Activated naive CD4-positive, alpha-beta T cell treated with anti-CD3 and anti-CD28 coated beads for 36 hours (primary cell): ENCODE measurements at regions of chr2 and their contacts with region 1.

Region 1: GRCh38 chr2:207625018-207625907 is at the start of gene METTL21A:
- DNase-seq: peak; percentile 95
- H3K4me3 Mint-ChIP-seq: peak within 1 kb of the TSS; percentile 88
- H3K27ac Mint-ChIP-seq: peak within 1 kb of the TSS; percentile 89
- H3K4me1 Mint-ChIP-seq: peaks cover 56% of the 10 kb centered on the region
- H3K27me3 Mint-ChIP-seq: no peaks in the 10 kb centered on the region
- total RNA-seq, gene METTL21A: 18.6 to 19.0 TPM

Region 2: DNA sequence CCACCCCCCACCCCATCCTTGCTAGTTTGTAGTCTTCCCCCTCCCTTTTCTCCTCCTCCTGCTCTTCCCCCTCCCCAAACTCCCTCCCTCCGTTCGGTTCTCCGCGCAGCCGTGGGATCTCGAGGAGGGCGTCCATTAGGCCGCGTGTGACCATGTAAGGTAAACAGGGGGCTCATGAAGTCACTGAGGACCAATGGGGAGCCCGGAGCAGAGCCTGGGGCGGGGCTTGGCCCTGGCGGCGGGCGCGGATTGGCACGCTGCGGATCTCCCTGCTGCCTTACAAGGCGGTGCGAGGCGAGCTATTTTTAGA is 459.3 kb before region 1 on chr2:
- CTCF ChIA-PET with region 1: no interaction called
- intact Hi-C with region 1: loop called (anchors 2 kb)
- DNase-seq: peak; percentile 98
- H3K4me3 Mint-ChIP-seq: peak overlapping the region; percentile 95
- H3K27ac Mint-ChIP-seq: peak overlapping the region; percentile 96
- H3K4me1 Mint-ChIP-seq: peaks cover 43% of the 10 kb centered on the region
- H3K27me3 Mint-ChIP-seq: no peaks in the 10 kb centered on the region

Region 3: GRCh38 chr2:207529330-207530159 is 95.7 kb before region 1 on chr2 and contains the start of gene CREB1:
- CTCF ChIA-PET with region 1: no interaction called
- intact Hi-C with region 1: loop called (anchors 1 kb)
- DNase-seq: peak; percentile 100
- H3K4me3 Mint-ChIP-seq: peak within 1 kb of the TSS; percentile 98
- H3K27ac Mint-ChIP-seq: peak within 1 kb of the TSS; percentile 100
- H3K4me1 Mint-ChIP-seq: peaks cover 59% of the 10 kb centered on the region
- H3K27me3 Mint-ChIP-seq: no peaks in the 10 kb centered on the region
- total RNA-seq, gene CREB1: 93.7 to 97.7 TPM

Region 4: GRCh38 chr2:207769597-207770486 is 144.6 kb after region 1 on chr2 and contains the start of gene FZD5:
- CTCF ChIA-PET with region 1: no interaction called
- intact Hi-C with region 1: loop called (anchors 1 kb)
- DNase-seq: peak; percentile 91
- H3K4me3 Mint-ChIP-seq: peak within 1 kb of the TSS; percentile 80
- H3K27ac Mint-ChIP-seq: no peak within 1 kb of the TSS
- H3K4me1 Mint-ChIP-seq: peaks cover 31% of the 10 kb centered on the region
- H3K27me3 Mint-ChIP-seq: peaks cover 36% of the 10 kb centered on the region
- total RNA-seq, gene FZD5: 1.5 to 1.7 TPM

Region 5: GRCh38 chr2:208033758-208034502 is 408.7 kb after region 1 on chr2:
- CTCF ChIA-PET with region 1: interaction called, 4 read pairs
- intact Hi-C with region 1: loop called (anchors 1 kb)
- DNase-seq: peak; percentile 59
- H3K4me3 Mint-ChIP-seq: no peak overlapping the region
- H3K27ac Mint-ChIP-seq: no peak overlapping the region
- H3K4me1 Mint-ChIP-seq: no peaks in the 10 kb centered on the region
- H3K27me3 Mint-ChIP-seq: no peaks in the 10 kb centered on the region

Region 6: DNA sequence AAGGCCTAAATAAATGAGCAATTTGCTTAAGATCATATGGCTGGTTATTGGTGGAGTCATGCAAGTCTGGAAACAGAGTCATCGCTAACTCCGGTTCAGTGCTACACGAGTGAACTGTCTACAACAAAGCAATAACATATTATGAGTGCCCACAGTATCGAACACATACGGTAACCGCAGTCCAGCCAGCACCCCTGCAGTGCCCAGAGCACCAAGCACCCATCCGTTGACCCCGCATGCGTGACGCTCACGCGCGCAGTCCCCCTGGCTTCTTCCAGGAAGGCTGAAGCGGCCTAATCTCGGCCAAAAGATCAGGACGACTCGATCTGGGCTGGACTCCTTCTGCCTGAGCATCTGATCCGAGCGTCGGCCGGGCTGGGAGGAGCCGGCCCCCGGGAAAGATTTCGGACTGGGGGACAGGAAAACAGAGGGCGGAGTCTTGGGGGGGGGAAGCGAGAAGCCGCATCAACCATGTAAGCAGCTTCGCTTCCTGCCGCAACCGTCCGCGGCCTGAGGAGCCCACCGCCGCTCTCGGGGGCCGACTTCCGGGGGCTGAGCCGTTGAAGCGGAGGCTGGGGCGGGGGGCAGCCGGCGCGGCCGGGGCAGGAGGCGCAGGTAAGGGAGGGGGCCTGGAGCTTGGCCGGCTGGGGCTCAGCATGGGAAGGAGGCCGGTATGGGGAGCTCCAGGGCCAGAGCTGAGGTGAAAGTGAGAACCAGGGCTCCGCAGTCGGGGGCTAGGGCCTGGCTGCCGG is 640.7 kb after region 1 on chr2 and contains the start of gene PIKFYVE:
- CTCF ChIA-PET with region 1: no interaction called
- intact Hi-C with region 1: loop called (anchors 1 kb)
- DNase-seq: peak; percentile 94
- H3K4me3 Mint-ChIP-seq: peak within 1 kb of the TSS; percentile 95
- H3K27ac Mint-ChIP-seq: peak within 1 kb of the TSS; percentile 94
- H3K4me1 Mint-ChIP-seq: peaks cover 33% of the 10 kb centered on the region
- H3K27me3 Mint-ChIP-seq: no peaks in the 10 kb centered on the region
- total RNA-seq, gene PIKFYVE: 20.2 to 22.4 TPM

Region 7: GRCh38 chr2:208326016-208326415 is 700.8 kb after region 1 on chr2:
- CTCF ChIA-PET with region 1: no interaction called
- intact Hi-C with region 1: no loop called
- DNase-seq: no peak
- H3K4me3 Mint-ChIP-seq: no peak overlapping the region
- H3K27ac Mint-ChIP-seq: no peak overlapping the region
- H3K4me1 Mint-ChIP-seq: no peaks in the 10 kb centered on the region
- H3K27me3 Mint-ChIP-seq: no peaks in the 10 kb centered on the region